Heart left ventricle (tissue), 16 donors: ENCODE measurements at regions of chr15 and their contacts with region 1.

Region 1: GRCh38 chr15:20409247-20409646 is 132.4 kb downstream of the GOLGA6L6 start:
- DNase-seq: no peak
- ATAC-seq: no peak
- H3K4me3 ChIP-seq: no peak overlapping the region
- H3K27ac ChIP-seq: no peak overlapping the region
- H3K4me1 ChIP-seq: no peaks in the 10 kb centered on the region
- H3K27me3 ChIP-seq: no peaks in the 10 kb centered on the region
- CTCF ChIP-seq: no peak
- POLR2A ChIP-seq: no peak

Region 2: DNA sequence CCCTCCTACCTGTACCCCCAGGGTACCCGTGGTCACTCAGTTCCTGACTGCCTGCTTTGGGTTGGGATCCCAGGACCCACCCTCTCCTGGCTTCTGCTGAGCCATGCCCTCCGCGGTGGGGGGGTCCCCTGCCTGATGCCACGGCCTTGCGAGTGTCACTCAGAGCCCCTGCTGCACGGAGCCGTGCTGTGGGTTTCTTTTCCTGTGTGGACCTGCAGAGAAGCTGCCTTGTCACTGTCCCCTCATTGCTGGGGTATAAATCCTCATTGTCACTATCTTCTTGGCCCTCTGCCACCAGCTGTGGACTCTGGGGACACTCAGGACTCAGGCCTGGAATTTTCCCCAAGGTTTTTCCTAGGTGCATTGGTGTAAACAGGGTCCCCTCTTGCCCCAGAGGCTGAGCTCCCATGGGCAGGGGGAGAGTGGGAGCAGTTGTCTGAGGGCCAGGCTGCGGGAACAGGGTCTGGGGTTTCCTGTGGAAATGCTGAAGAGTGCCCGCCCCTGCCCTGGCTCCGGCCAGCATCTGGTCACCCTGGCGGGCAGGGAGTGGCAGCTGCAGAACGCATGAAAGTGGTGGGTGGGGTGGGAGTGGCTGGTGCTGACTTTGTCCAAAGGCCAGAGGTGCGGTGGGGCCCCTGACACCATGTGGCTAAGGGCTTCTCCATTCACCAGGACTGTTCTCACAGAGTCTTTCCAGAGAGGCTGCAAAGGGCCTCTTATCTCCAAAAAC is 59.3 kb before region 1 on chr15:
- intact Hi-C with region 1: loop called in 1 of 10 experiments (anchors 5 kb)
- DNase-seq: peak in 2 of 5 donors; percentile 20 to 72
- ATAC-seq: peak in 1 of 4 donors; percentile 2
- H3K4me3 ChIP-seq: no peak overlapping the region
- H3K27ac ChIP-seq: no peak overlapping the region
- H3K4me1 ChIP-seq: no peaks in the 10 kb centered on the region
- H3K27me3 ChIP-seq: peaks cover 0 to 66% (median 5%) of the 10 kb centered on the region in 9 donors
- CTCF ChIP-seq: no peak
- POLR2A ChIP-seq: no peak